GM23248 (cell line): ENCODE measurements at regions of chr1 and their contacts with region 1.

Region 1: DNA sequence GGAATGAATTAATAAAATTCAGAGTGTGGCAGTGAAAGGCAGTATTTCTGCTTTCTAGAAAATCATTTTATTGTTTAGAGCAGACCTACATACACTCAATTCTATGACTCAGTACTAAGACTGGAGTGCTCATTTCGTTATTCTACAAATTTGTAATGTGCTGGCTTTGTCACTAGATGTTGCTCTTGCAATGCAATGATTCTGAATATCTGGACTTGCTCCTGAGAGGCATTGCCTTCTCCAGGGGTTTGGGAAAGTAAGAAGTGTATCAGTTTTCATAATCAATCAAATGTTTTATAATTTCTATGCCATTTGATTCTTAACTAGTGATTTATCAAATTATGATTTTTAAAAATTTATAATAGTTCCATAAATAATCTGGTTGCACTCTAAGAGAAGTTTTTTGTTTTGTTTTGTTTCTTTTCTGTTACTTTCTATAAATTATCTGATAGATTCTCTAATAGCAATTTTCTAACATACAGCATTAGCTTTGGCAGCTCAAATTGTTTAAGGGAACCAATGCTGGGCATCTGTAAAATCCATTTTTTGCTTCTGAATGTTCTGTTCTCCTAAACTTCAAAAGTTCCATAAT is 280.5 kb upstream of the SGIP1 start:
- DNase-seq: peak; percentile 86
- H3K4me3 ChIP-seq: no peak overlapping the region
- H3K27ac ChIP-seq: no peak overlapping the region
- H3K4me1 ChIP-seq: peaks cover 26% of the 10 kb centered on the region
- H3K27me3 ChIP-seq: no peaks in the 10 kb centered on the region

Region 2: GRCh38 chr1:65615859-65616258 is 637.6 kb before region 1 on chr1:
- in situ Hi-C with region 1: no loop called
- DNase-seq: no peak
- H3K4me3 ChIP-seq: no peak overlapping the region
- H3K27ac ChIP-seq: no peak overlapping the region
- H3K4me1 ChIP-seq: no peaks in the 10 kb centered on the region
- H3K27me3 ChIP-seq: no peaks in the 10 kb centered on the region

Region 3: GRCh38 chr1:66393586-66394287 is 140.3 kb after region 1 on chr1:
- in situ Hi-C with region 1: no loop called
- DNase-seq: no peak
- H3K4me3 ChIP-seq: no peak overlapping the region
- H3K27ac ChIP-seq: no peak overlapping the region
- H3K4me1 ChIP-seq: no peaks in the 10 kb centered on the region
- H3K27me3 ChIP-seq: no peaks in the 10 kb centered on the region

Region 4: GRCh38 chr1:66503841-66504470 is 250.5 kb after region 1 on chr1:
- in situ Hi-C with region 1: loop called (anchors 10 kb)
- DNase-seq: peak; percentile 81
- H3K4me3 ChIP-seq: 0 out of 2 replicates have a peak overlapping the region, but pooled peaks have one; percentile 12
- H3K27ac ChIP-seq: no peak overlapping the region
- H3K4me1 ChIP-seq: peaks cover 36% of the 10 kb centered on the region
- H3K27me3 ChIP-seq: no peaks in the 10 kb centered on the region

Region 5: GRCh38 chr1:66533804-66534740 is 280.6 kb after region 1 on chr1 and contains the start of gene SGIP1:
- in situ Hi-C with region 1: no loop called
- DNase-seq: peak; percentile 83
- H3K4me3 ChIP-seq: peak within 1 kb of the TSS; percentile 74
- H3K27ac ChIP-seq: peak within 1 kb of the TSS; percentile 61
- H3K4me1 ChIP-seq: 0 out of 2 replicates have a peak, but pooled peaks cover 3% of the 10 kb centered on the region
- H3K27me3 ChIP-seq: no peaks in the 10 kb centered on the region
- total RNA-seq, gene SGIP1: 2.1 and 4.0 TPM in 2 replicates

Region 6: DNA sequence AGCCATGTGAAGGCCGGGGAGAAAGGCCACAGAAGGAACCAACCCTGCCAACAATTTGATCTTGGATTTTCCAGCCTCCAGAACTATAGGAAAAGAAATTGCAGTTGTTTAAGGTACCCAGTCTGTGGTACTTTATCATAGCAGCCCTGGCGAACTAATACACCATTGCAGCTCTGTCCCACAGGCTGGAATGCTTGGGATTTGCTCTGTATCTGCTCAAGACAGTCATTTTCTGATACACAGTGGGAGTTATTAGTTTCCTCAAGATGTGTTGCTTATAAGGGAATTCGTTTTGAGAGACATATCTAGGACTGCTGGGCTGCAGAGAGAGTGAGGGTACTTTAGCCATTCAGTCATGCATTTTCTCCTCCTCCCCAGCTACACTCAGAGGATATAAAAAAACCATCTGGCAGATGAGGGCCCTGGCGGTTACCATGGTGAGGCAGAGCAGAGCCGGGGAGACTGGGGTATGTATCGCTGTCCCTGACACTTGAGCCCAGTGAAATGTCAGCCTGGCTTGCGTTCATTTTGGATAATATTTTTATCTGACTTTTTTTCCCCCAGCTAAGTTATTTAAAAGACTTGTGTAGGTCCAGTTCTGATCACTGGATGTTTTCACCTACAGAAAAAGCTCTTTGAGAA is 1692.4 kb after region 1 on chr1:
- in situ Hi-C with region 1: no loop called
- DNase-seq: no peak
- H3K4me3 ChIP-seq: no peak overlapping the region
- H3K27ac ChIP-seq: no peak overlapping the region
- H3K4me1 ChIP-seq: peaks cover 29% of the 10 kb centered on the region
- H3K27me3 ChIP-seq: no peaks in the 10 kb centered on the region